ENCODE measurements at regions of chr15 and their contacts with region 1.

Region 1: DNA sequence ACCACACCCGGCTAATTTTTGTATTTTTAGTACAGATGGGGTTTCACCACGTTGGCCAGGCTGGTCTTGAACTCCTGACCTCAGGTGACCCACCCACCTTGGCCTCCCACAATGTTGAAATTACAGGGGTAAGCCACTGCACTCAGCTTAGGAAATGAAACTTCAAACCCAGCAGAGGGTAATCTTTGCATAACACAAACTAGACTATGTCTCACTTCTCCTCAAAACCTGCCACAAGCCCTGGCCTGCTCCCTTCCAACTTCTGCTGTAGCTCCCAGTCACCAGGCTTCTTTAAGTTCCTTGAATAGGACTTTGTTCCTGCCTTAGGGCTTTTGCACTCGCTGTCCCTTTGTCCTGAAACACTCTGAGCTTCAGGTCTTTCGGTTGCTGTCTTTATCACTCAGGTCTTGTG is 39.2 kb upstream of the SEMA4B start:
- DNase-seq: no peak
- H3K4me3 ChIP-seq: no peak overlapping the region
- H3K27ac ChIP-seq: no peak overlapping the region
- H3K4me1 ChIP-seq: peaks cover 7% of the 10 kb centered on the region
- H3K27me3 ChIP-seq: no peaks in the 10 kb centered on the region
- CTCF ChIP-seq: no peak
- EP300 ChIP-seq: no peak
- POLR2A ChIP-seq: no peak

Region 2: DNA sequence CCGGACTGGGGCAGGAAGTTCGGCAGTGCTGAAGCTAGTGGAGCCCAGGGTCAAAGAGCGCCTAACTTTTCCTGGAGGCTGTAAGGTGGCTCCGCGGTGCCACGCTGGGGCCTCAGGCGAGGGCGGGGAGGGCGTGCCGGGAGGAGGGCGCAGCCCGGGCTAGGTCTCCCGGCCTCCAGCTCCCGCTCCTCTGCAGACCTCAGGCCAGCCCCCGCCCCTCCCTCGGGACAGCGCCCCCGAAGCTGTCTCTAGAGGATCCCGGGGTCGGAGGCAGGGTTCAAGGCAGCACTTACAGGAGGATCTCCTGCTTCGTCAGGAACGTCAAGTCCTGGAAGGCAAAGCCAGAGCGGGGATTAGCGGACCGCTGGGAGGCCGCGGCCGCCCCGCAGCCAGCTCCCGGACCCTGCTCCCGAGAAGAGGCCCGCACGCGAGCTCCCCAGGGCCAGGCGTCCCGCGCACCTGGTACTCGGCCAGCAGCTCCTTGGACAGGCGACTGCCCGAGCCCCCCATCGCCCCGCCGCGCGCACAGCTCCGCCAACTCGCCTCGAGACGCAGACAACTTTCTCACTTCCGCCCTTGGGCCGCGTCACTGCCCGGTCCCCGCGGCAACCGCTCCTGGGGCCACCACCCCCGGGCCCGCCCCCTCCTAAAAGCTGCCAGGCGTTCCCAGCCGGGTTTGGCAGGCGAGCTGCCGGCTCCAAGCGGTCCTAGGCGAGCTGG is 71.6 kb after region 1 on chr15 and contains the start of gene CIB1:
- intact Hi-C with region 1: loop called in 1 of 4 experiments (anchors 5 kb)
- DNase-seq: peak; percentile 97 to 99 (median 98)
- H3K4me3 ChIP-seq: peak within 1 kb of the TSS; percentile 78
- H3K27ac ChIP-seq: peak within 1 kb of the TSS; percentile 74 to 77
- H3K4me1 ChIP-seq: peaks cover 4% of the 10 kb centered on the region
- H3K27me3 ChIP-seq: no peaks in the 10 kb centered on the region
- CTCF ChIP-seq: peak in 2 of 3 donors; percentile 3 to 46
- EP300 ChIP-seq: no peak
- POLR2A ChIP-seq: peak; percentile 59
- total RNA-seq, gene CIB1: 18.5 to 68.8 (median 45.0) TPM